ENCODE measurements at regions of chr21 and their contacts with region 1.

Region 1: GRCh38 chr21:34986561-34987500 is 62.3 kb downstream of the RUNX1 start:
- DNase-seq: peak; percentile 92
- H3K4me3 Mint-ChIP-seq: peak overlapping the region; percentile 71
- H3K27ac Mint-ChIP-seq: peak overlapping the region; percentile 89
- H3K4me1 Mint-ChIP-seq: peaks cover 94% of the 10 kb centered on the region
- H3K27me3 Mint-ChIP-seq: no peaks in the 10 kb centered on the region

Region 2: DNA sequence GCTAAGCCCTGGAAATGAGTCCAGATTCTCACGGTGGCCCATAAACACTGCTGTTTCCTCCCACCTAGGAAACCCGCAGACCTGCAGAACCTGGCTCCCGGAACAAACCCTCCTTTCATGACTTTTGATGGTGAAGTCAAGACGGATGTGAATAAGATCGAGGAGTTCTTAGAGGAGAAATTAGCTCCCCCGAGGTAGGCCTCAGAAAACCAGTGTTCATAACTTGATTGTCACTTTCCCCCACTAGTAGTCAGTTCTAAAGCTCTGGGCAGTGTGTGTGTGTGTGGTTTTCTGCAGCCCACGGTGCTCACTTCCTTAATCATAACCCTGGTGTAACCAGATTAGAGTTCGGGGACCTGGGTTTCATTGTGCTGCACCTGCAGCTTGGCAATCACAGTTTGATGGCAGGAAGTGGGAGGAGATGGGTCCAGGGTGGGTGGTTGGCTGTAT is 278.9 kb before region 1 on chr21:
- CTCF ChIA-PET with region 1: no interaction called
- intact Hi-C with region 1: no loop called
- DNase-seq: peak; percentile 83
- H3K4me3 Mint-ChIP-seq: no peak overlapping the region
- H3K27ac Mint-ChIP-seq: peak overlapping the region; percentile 73
- H3K4me1 Mint-ChIP-seq: peaks cover 28% of the 10 kb centered on the region
- H3K27me3 Mint-ChIP-seq: peaks cover 4% of the 10 kb centered on the region

Region 3: DNA sequence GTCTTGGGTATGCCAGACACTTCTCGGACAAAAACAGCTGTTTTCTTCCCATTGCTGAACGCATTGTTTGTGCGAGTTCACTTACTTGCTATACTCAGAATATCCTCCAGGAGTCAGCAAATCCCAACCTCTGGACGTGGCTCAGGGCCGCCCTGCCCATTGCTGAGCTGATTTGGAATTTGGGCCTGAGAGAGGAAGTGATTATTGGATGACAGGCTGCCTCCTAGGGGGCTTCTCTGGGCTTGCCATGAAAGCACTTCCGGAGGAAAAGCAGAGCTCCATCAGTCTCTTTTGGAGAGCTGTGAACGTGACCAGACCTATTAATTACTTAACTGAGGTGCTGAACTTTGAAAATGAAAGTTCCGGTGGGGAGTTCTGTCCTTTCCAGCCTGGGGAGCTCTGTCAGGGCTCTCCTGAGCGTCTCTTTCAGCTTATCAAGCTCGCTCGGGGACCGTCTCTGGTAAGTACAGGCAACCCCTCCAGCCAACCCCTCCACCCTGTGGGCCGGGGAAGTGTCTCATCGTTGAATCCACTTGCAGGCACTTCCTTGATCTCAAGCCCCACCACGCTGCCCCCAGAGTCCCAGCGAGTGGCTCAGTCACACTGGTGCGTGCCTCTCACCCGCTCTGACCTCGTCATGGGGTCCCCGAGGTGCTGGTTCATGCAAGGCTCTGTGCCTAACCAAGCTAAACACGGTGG is 241.1 kb before region 1 on chr21:
- CTCF ChIA-PET with region 1: no interaction called
- intact Hi-C with region 1: loop called (anchors 10 kb)
- DNase-seq: peak; percentile 74
- H3K4me3 Mint-ChIP-seq: peak overlapping the region; percentile 47
- H3K27ac Mint-ChIP-seq: peak overlapping the region; percentile 54
- H3K4me1 Mint-ChIP-seq: peaks cover 4% of the 10 kb centered on the region
- H3K27me3 Mint-ChIP-seq: no peaks in the 10 kb centered on the region

Region 4: GRCh38 chr21:34912159-34912945 is 74.5 kb before region 1 on chr21:
- CTCF ChIA-PET with region 1: no interaction called
- intact Hi-C with region 1: no loop called
- DNase-seq: no peak
- H3K4me3 Mint-ChIP-seq: no peak overlapping the region
- H3K27ac Mint-ChIP-seq: no peak overlapping the region
- H3K4me1 Mint-ChIP-seq: peaks cover 67% of the 10 kb centered on the region
- H3K27me3 Mint-ChIP-seq: no peaks in the 10 kb centered on the region

Region 5: GRCh38 chr21:34946916-34947534 is 39.8 kb before region 1 on chr21:
- CTCF ChIA-PET with region 1: interaction called, 4 read pairs
- intact Hi-C with region 1: loop called (anchors 1 kb)
- DNase-seq: peak; percentile 44
- H3K4me3 Mint-ChIP-seq: no peak overlapping the region
- H3K27ac Mint-ChIP-seq: peak overlapping the region; percentile 87
- H3K4me1 Mint-ChIP-seq: peaks cover 92% of the 10 kb centered on the region
- H3K27me3 Mint-ChIP-seq: no peaks in the 10 kb centered on the region

Region 6: DNA sequence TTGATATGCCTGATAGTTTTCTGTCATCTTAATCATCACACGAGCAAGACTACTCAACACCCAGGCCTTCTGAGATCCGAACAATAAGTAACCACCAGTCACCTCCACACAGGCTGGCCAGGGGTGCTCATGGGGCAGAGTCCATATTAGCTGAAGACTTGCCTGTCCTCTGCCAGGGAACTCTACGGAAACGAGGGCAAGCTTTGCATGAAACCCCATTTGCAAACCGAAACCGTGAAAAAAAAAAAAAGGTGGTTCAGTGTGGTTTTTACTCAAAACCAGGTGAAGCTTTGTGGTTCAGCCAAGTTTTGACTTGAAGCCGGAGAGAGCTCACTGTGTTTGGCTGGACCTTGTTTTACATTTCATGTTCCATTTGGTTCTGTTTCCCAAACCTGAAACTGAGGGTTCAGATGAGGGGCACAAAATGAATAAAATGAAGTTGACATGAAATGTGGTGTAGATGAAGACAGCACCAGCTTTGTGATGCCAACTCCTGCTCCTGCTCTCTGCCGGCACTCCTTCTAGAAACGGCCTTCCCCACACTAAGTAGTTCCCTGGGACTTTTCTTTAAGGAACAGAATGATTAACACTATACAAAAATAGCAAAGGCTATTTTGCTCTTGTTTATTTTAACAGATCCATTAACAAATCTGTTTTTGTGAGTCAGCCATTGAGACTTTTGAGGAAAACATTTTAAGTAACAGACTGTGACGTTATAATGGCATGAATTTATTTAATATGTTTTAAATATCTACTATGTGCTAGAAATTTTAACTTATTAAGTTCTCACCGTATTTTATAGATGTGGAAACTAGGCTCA is 12.5 kb before region 1 on chr21:
- CTCF ChIA-PET with region 1: interaction called, 20 read pairs
- intact Hi-C with region 1: loop called (anchors 1 kb)
- DNase-seq: peak; percentile 64
- H3K4me3 Mint-ChIP-seq: peak overlapping the region; percentile 69
- H3K27ac Mint-ChIP-seq: peak overlapping the region; percentile 80
- H3K4me1 Mint-ChIP-seq: peaks cover 72% of the 10 kb centered on the region
- H3K27me3 Mint-ChIP-seq: peaks cover 3% of the 10 kb centered on the region

Region 7: GRCh38 chr21:35045542-35046262 is 58.9 kb after region 1 on chr21:
- CTCF ChIA-PET with region 1: interaction called, 22 read pairs
- intact Hi-C with region 1: loop called (anchors 1 kb)
- DNase-seq: peak; percentile 59
- H3K4me3 Mint-ChIP-seq: peak overlapping the region; percentile 86
- H3K27ac Mint-ChIP-seq: peak overlapping the region; percentile 97
- H3K4me1 Mint-ChIP-seq: peaks cover 81% of the 10 kb centered on the region
- H3K27me3 Mint-ChIP-seq: no peaks in the 10 kb centered on the region

Region 8: DNA sequence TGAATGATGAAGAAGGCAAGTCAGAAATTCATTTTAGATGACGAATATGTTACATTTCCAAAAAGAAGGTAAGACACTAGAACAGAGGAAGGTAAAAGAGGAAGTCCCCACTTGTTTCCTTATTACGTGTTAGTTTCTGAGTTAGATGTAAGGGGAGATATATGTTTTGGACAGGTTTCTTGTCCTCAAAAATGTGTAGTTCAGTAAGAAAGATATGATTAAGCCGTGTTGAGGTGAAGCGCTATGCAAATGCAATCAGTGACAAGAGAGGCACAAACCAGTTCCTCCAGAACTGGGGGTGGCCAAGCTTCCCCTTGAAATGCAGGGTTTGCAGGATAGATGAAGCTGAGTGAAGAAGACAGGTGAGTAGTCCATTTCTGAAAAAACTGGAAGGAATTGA is 355.6 kb after region 1 on chr21:
- CTCF ChIA-PET with region 1: no interaction called
- intact Hi-C with region 1: loop called (anchors 5 kb)
- DNase-seq: peak; percentile 68
- H3K4me3 Mint-ChIP-seq: peak overlapping the region; percentile 39
- H3K27ac Mint-ChIP-seq: peak overlapping the region; percentile 93
- H3K4me1 Mint-ChIP-seq: peaks cover 42% of the 10 kb centered on the region
- H3K27me3 Mint-ChIP-seq: peaks cover 4% of the 10 kb centered on the region

Measured in activated naive CD4-positive, alpha-beta T cell treated with anti-CD3 and anti-CD28 coated beads for 36 hours (primary cell).